IMR-90 (cell line): ENCODE measurements at regions of chr11 and their contacts with region 1.

Region 1: DNA sequence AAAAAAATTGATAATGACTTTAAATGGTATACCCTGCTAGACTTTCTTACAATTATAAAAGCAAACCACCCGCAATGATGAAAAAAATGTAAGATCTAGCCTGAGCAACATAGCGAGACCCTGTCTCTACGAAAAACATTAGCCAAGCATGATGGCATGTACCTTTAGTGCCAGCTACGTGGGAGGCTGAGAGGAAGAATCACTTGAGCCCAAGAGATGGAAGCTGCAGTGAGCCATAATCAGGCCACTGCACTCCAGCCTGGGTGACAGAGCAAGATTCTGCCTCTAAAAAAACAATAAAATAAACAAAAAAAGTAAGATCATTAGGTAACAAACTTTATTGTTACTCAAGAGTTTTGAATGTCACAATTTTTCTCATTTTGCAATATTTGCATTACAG is 39.2 kb downstream of the KMT5B start:
- DNase-seq: no peak
- ATAC-seq: no peak
- H3K4me3 ChIP-seq: no peak overlapping the region
- H3K27ac ChIP-seq: no peak overlapping the region
- H3K4me1 ChIP-seq: no peaks in the 10 kb centered on the region
- H3K27me3 ChIP-seq: no peaks in the 10 kb centered on the region
- CTCF ChIP-seq: no peak
- POLR2A ChIP-seq: no peak
- RAD21 ChIP-seq: no peak

Region 2: GRCh38 chr11:68066742-68067141 is 107.2 kb before region 1 on chr11:
- CTCF ChIA-PET with region 1: no interaction called
- POLR2A ChIA-PET with region 1: no interaction called
- dilution Hi-C with region 1: no loop called
- in situ Hi-C with region 1: loop called (anchors 10 kb)
- intact Hi-C with region 1: no loop called
- DNase-seq: no peak
- ATAC-seq: no peak
- H3K4me3 ChIP-seq: no peak overlapping the region
- H3K27ac ChIP-seq: no peak overlapping the region
- H3K4me1 ChIP-seq: no peaks in the 10 kb centered on the region
- H3K27me3 ChIP-seq: no peaks in the 10 kb centered on the region
- CTCF ChIP-seq: no peak
- POLR2A ChIP-seq: no peak
- RAD21 ChIP-seq: no peak

Region 3: GRCh38 chr11:68480852-68481510 is 307.1 kb after region 1 on chr11:
- CTCF ChIA-PET with region 1: no interaction called
- POLR2A ChIA-PET with region 1: no interaction called
- dilution Hi-C with region 1: no loop called
- in situ Hi-C with region 1: no loop called
- intact Hi-C with region 1: no loop called
- DNase-seq: no peak
- ATAC-seq: no peak; the same call in none of the 2 replicates
- H3K4me3 ChIP-seq: no peak overlapping the region
- H3K27ac ChIP-seq: no peak overlapping the region
- H3K4me1 ChIP-seq: 0 out of 2 replicates have a peak, but pooled peaks cover 6% of the 10 kb centered on the region
- H3K27me3 ChIP-seq: no peaks in the 10 kb centered on the region
- CTCF ChIP-seq: no peak
- POLR2A ChIP-seq: no peak
- RAD21 ChIP-seq: no peak